ENCODE measurements at regions of chr7 and their contacts with region 1.

Region 1: GRCh38 chr7:149239345-149240191 is at the start of gene ZNF212:
- DNase-seq: peak; percentile 92 to 95
- ATAC-seq: peak; percentile 100
- H3K4me3 ChIP-seq: peak within 1 kb of the TSS; percentile 94
- H3K27ac ChIP-seq: peak within 1 kb of the TSS; percentile 83
- H3K4me1 ChIP-seq: peaks cover 15% of the 10 kb centered on the region
- H3K27me3 ChIP-seq: peaks cover 0 to 2% (median 0%) of the 10 kb centered on the region in 3 donors
- CTCF ChIP-seq: peak; percentile 74
- total RNA-seq, gene ZNF212: 3.2 to 6.4 (median 4.5) TPM

Region 2: GRCh38 chr7:149154030-149154429 is 85.5 kb before region 1 on chr7:
- intact Hi-C with region 1: loop called in 1 of 2 experiments (anchors 10 kb)
- DNase-seq: no peak
- ATAC-seq: no peak
- H3K4me3 ChIP-seq: no peak overlapping the region
- H3K27ac ChIP-seq: no peak overlapping the region
- H3K4me1 ChIP-seq: peaks cover 15% of the 10 kb centered on the region
- H3K27me3 ChIP-seq: no peaks in the 10 kb centered on the region
- CTCF ChIP-seq: no peak

Region 3: DNA sequence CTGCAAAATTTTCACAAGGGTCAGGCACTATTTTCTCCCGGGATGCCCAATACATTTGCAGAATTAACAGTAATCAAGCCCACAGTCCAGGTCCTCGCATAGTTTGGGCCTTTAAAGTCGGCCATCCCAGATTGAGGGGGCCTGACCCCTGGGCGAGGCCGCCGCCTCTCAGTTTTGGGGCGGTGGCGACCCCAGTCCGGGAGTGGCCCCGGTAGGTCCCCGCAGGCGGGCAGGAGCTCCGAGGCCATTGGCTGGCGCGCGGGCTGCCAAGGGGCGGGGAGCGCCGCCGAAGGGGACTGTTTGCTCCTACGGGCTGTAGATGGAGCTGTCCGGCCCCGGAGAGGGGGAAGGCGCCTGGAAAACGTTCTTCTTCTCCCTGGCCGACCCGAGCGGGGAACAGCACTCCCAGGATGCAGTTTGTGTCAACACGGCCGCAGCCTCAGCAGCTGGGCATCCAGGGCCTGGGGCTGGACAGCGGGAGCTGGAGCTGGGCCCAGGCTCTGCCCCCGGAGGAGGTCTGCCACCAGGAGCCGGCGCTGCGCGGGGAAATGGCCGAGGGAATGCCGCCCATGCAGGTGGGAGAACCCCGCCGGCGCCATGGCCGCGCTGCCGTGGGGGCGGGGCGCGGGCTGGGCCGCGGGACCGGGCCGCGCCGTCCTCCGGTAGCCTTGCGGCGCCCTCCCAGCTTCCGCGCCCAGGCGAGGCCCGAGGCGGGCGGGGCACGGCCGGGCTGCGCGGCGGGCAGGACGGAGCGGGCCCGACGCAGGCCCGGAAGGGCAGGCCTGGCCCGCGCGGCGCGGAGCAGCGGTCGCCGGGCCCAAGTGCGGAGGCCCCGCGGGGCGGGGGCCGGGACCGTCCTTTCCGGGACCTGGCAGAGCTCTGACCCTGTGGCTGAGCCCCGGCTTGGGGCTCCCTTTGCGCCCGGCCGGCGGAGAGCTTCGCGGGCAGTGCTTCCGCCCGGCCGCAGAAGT is 44.1 kb before region 1 on chr7 and contains the start of gene ZNF282:
- intact Hi-C with region 1: loop called (anchors 5 kb)
- DNase-seq: peak; percentile 90 to 93
- ATAC-seq: peak; percentile 95 to 99 (median 98)
- H3K4me3 ChIP-seq: peak within 1 kb of the TSS; percentile 95
- H3K27ac ChIP-seq: peak within 1 kb of the TSS; percentile 95
- H3K4me1 ChIP-seq: peaks cover 10% of the 10 kb centered on the region
- H3K27me3 ChIP-seq: no peaks in the 10 kb centered on the region
- CTCF ChIP-seq: peak; percentile 59
- total RNA-seq, gene ZNF282: 15.3 to 22.5 (median 16.7) TPM